AG04449 (cell line): ENCODE measurements at regions of chrX and their contacts with region 1.

Region 1: DNA sequence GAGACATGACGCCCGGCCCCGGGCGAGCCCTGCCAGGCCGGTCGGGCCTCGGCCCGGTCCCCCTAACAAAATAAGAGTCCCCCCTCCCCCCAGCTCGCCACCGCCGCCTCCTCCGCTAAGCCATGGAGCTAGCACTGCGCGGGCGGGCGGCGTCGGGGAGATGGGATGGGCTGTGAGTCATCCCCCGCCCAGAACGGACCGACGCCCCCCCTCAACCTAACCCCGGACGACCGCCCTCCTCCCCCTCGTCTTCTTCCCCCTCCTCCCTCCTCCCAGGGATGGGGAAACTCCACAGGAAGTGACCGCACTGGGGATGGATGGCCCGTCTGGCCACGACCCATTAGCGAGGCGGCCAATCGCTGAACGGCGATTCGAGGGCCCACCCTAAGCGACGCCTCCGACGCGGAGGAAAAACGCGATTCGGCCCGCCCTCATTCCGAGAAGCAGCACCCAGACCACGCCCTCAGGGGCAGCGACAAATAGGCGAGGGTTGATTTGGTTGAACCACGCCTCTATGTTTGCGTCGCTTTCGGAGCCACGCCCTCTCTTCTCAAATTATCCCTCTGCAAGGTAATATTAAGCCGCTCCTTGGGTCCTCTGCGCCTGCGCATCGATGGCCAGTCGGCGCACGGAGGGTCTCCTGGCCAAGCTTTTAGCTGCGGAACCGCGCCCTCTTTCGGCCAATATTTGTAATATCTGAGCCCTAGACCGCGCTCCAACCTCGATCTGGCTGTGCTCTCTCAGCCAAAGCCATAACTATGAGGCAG is at the start of gene TFE3:
- DNase-seq: peak; percentile 89
- H3K4me3 ChIP-seq: peak within 1 kb of the TSS; percentile 71
- CTCF ChIP-seq: peak; percentile 48

Region 2: DNA sequence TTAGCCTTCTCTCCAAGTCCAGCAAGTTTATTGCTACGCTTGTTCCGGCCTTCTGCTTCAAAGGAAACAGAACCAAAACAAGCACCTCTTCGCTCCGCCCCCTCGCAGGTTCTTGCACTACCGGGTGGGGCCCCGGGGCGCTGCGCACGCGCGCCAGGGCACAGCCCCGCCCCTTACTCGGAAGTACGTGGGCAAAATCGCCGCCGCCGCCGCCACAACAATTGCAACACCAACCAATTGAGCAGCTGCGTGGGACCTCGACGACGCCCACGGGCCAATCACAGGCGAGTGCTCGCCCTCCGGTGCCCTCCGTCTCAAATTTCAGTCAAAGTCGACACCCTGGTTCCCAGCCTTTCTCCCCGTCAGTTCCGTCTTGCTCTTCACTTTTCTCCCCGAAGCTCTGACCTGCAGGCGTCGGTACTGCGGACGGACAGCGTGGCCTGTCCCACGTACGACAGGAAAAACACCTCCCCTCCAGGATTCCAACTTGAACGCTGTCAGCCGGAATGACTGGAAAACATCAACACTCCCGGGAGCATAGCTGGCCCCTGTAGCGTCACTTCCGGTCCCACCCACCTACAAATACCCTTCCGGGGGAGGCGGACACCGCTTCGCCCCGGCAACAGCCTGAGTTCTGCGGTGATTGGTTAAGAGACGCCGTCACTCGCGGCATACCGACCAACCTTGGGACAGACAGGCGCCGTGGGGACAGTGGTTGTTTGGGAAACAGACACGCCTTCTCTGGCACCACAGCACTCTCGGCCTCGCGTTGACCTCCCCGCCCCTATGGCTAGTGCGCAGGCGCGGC is 85.4 kb before region 1 on chrX:
- CTCF ChIA-PET with region 1: interaction called, 9 read pairs
- POLR2A ChIA-PET with region 1: interaction called, 11 read pairs
- DNase-seq: peak; percentile 89
- H3K4me3 ChIP-seq: peak overlapping the region; percentile 72
- CTCF ChIP-seq: no peak

Region 3: GRCh38 chrX:49053223-49054072 is 10.0 kb after region 1 on chrX:
- CTCF ChIA-PET with region 1: interaction called, 10 read pairs
- POLR2A ChIA-PET with region 1: interaction called, 3 read pairs
- DNase-seq: no peak
- H3K4me3 ChIP-seq: peak overlapping the region; percentile 59
- CTCF ChIP-seq: no peak